ENCODE measurements at regions of chr3 and their contacts with region 1.

Region 1: DNA sequence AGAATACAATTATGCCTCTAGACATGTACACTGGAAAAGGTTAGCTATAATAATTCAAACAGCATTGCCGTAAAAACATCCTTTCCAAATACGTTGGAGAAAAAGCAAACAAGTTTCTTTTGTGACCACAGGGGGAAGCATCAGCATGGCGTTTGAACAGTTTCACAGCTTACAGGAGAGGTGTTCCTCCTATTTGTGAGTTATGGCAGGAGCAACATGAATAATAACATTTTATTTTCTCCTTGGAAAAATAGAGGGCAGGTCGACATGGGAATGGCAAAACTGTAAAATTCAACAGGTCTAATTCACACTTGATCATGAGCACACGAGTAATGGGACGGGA is 39.7 kb upstream of the GADL1 start:
- ATAC-seq: peak in 5 of 8 experiments; percentile 21 to 66 (median 37)
- H3K4me3 ChIP-seq: no peak overlapping the region
- H3K27ac ChIP-seq: no peak overlapping the region
- H3K4me1 ChIP-seq: peaks cover 0 to 6% of the 10 kb centered on the region in 2 donors

Region 2: GRCh38 chr3:31105438-31106077 is 171.4 kb after region 1 on chr3:
- in situ Hi-C with region 1: loop called in 1 of 9 experiments (anchors 25 kb)
- ATAC-seq: peak in 2 of 8 experiments; percentile 42 to 75
- H3K4me3 ChIP-seq: no peak overlapping the region
- H3K27ac ChIP-seq: no peak overlapping the region
- H3K4me1 ChIP-seq: no peaks in the 10 kb centered on the region

Region 3: DNA sequence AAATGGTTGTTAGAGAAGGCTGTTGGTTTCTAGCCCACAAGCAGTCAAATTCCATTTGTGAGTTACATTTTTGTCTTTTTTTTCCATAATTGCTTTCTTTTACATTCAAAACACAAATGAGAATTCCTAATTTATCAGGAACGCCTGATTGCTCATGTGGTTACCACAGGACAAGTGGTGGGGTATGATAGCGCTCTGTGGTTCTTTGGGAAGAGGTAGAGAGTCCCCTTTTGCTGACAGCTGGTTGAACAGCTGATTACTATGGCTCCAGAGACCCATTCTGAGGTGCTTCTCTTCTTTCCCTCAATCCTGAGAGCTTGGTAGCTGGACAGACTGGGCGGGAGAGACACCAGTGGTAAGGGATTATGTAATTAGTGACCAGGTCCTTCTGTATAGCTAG is 1775.2 kb after region 1 on chr3:
- in situ Hi-C with region 1: no loop called
- ATAC-seq: no peak
- H3K4me3 ChIP-seq: no peak overlapping the region
- H3K27ac ChIP-seq: no peak overlapping the region
- H3K4me1 ChIP-seq: no peaks in the 10 kb centered on the region